ENCODE measurements at regions of chr10 and their contacts with region 1.

Region 1: DNA sequence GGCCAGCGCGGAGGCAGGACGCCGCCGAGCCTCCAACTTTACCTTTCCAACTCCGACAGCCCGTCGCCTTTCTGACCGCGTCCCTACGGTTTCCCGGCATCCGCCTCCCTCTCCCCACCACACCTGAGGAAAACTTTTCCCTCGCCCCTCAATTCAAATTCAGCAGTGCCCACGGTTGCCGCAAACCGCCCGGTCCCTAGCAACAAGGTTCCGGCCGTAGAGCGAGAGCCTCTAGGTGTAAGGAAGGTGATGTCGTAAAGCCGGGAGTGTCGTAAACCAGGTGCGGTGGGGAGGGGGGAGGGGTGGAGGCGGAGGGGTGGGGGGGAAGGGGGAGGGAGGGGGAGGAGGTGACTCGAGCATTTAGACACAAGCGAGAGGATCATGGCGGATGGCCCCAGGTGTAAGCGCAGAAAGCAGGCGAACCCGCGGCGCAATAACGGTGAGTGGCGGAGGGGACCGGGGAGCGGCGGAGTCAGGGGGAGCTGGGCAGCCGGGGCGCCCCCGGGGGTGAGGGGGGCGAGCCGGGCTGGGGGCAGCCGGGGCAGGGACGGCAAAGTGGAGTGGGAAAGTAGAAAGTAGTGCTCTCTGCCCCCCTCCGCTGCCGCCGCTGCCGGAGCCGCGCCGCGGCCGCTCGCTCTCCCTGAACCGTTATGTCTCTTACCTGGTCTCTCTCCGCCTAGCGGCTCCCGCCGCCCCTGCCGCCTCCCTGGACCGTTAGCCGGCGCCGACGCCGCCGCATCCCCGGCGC is at the start of gene ZEB1:
- DNase-seq: peak; percentile 92
- ATAC-seq: peak; percentile 78
- total RNA-seq, gene ZEB1: 63.7 to 74.7 TPM

Region 2: GRCh38 chr10:30783939-30784500 is 535.0 kb before region 1 on chr10:
- intact Hi-C with region 1: loop called (anchors 5 kb)
- DNase-seq: peak; percentile 89
- ATAC-seq: peak; percentile 85 to 89

Region 3: DNA sequence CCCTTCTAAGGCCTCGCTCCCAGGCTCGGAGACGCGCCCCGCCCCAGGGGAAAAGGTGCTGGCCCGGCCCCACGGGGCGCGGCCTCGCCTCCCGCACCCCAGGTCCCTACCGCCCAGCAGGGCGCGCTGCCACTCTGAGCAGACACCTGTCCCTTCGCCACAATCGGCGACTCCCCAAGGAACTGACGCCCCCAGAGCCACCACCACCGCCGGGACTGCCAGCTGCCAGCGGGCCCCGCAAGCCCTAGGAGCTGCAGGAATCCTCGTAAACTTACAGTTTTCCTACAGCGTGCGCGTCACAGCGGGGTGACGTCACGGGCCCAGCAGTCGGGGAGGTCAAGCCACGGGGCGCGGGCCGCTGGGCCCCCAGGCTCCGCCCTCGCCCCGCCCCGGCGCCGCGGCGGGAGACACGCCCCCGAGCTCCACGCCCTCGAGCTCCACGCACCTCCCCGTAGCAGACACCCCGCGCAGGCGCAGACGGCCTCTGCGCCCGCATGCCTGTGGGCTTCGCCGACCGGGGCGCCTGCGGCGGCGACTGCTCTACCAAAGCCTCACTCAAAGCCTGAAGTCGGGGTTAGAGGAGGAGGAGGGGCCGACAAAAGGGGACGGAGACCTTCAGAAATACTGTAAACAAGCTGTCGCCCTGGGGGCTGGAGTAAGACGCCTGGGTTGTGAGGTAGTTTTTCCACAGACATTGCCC is 287.3 kb before region 1 on chr10 and contains the start of gene ZNF438:
- intact Hi-C with region 1: loop called in 1 of 2 experiments (anchors 5 kb)
- DNase-seq: peak; percentile 95
- ATAC-seq: peak; percentile 97 to 98
- total RNA-seq, gene ZNF438: 11.4 to 11.6 TPM

Region 4: DNA sequence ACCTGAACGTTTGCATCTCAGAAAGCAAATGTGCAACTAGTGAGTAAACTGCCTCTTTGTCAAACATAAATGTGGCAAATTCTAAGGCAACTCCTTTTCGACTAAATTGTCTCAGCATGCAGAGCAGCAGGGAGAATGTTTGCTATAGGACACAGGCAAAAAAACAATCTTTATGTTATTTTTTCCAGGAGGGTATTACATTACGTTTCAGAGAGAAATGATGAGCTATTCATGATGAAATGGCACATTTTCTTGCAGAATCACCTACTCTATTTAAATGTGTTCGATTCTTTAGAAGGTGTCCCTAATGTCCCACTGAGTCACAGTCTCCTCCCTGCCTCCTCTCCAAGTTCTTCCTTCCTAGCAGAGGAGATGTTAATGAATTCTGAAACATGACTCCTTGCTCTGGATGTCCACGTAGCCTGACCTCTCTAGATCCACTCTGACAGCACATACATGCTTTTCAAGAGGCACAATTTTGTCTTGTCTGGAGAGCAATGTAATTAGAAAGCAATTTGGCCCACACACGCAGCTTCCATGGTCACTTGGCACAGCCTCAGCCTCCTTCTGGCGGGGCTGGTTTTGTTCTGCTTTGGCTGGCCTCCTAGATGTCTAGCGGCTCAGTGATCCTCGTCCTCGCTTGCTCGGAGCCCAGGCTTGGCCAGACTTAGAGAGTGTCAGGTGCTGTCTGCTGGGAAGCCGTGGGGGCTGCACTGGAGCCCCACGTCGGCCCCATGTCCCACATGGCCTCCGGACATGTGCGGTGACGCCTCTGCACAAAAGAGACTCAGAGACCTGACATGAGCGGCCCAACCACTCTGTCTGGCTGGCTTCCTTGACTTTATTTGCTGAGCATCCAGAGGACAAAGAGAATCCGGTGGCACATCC is 161.7 kb before region 1 on chr10:
- intact Hi-C with region 1: loop called in 1 of 2 experiments (anchors 10 kb)
- DNase-seq: peak; percentile 68
- ATAC-seq: peak; percentile 91 to 97

Region 5: DNA sequence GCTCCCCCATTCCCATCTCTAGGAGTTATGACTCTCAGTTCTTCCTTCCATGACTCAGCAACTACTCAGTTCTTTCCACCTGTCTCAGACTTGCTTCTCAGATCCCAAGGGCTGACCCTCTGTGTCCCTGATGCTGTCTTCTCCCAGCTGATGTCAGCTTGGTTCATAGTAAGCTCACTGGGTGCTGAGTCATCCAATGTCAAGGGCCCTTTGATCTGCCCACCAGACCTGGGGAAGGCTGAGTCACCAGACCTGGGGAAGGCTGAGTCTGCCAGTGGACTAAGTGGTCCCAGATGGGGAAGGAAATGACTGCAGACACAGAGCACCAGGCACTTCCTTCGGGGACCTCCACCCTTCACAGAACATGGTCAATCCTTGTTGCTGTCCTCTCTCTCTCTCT is 76.1 kb before region 1 on chr10:
- intact Hi-C with region 1: no loop called
- DNase-seq: peak; percentile 28
- ATAC-seq: peak in 1 of 2 donors; percentile 83

Region 6: GRCh38 chr10:31467796-31468535 is 148.9 kb after region 1 on chr10:
- intact Hi-C with region 1: loop called in 1 of 2 experiments (anchors 10 kb)
- DNase-seq: no peak
- ATAC-seq: peak; percentile 37 to 59

Region 7: GRCh38 chr10:31770307-31770902 is 451.4 kb after region 1 on chr10:
- intact Hi-C with region 1: loop called in 1 of 2 experiments (anchors 10 kb)
- DNase-seq: peak; percentile 41
- ATAC-seq: peak; percentile 41 to 84

Region 8: GRCh38 chr10:31808258-31809218 is 489.5 kb after region 1 on chr10:
- intact Hi-C with region 1: loop called in 1 of 2 experiments (anchors 5 kb)
- DNase-seq: peak; percentile 41
- ATAC-seq: peak; percentile 79 to 88

Measured in left cardiac atrium (tissue), 4 donors.